Esophagus muscularis mucosa (tissue), 4 donors: ENCODE measurements at regions of chr22 and their contacts with region 1.

Region 1: GRCh38 chr22:45096256-45096907 is 67.3 kb upstream of the NUP50 start:
- DNase-seq: no peak
- H3K4me3 ChIP-seq: no peak overlapping the region
- H3K27ac ChIP-seq: no peak overlapping the region
- H3K4me1 ChIP-seq: no peaks in the 10 kb centered on the region
- H3K27me3 ChIP-seq: peaks cover 0 to 93% (median 5%) of the 10 kb centered on the region in 4 donors
- CTCF ChIP-seq: peak; percentile 62 to 79 (median 69)
- EP300 ChIP-seq: no peak
- POLR2A ChIP-seq: no peak

Region 2: GRCh38 chr22:44819971-44820631 is 276.3 kb before region 1 on chr22:
- intact Hi-C with region 1: loop called (anchors 5 kb)
- DNase-seq: no peak
- H3K4me3 ChIP-seq: no peak overlapping the region
- H3K27ac ChIP-seq: no peak overlapping the region
- H3K4me1 ChIP-seq: peaks cover 0 to 6% (median 3%) of the 10 kb centered on the region in 4 donors
- H3K27me3 ChIP-seq: peaks cover 0 to 67% (median 0%) of the 10 kb centered on the region in 4 donors
- CTCF ChIP-seq: no peak
- EP300 ChIP-seq: no peak
- POLR2A ChIP-seq: no peak

Region 3: GRCh38 chr22:44975427-44976262 is 120.7 kb before region 1 on chr22:
- intact Hi-C with region 1: loop called (anchors 2 kb)
- DNase-seq: no peak
- H3K4me3 ChIP-seq: no peak overlapping the region
- H3K27ac ChIP-seq: no peak overlapping the region
- H3K4me1 ChIP-seq: no peaks in the 10 kb centered on the region
- H3K27me3 ChIP-seq: peaks cover 0 to 18% (median 0%) of the 10 kb centered on the region in 4 donors
- CTCF ChIP-seq: peak; percentile 46 to 60 (median 52)
- EP300 ChIP-seq: no peak
- POLR2A ChIP-seq: no peak